ENCODE measurements at regions of chr11 and their contacts with region 1.

Region 1: GRCh38 chr11:2077061-2077802 is 62.0 kb downstream of the IGF2 start:
- DNase-seq: no peak
- H3K4me3 Mint-ChIP-seq: no peak overlapping the region
- H3K27ac Mint-ChIP-seq: peak overlapping the region; percentile 84
- H3K4me1 Mint-ChIP-seq: peaks cover 23% of the 10 kb centered on the region
- H3K27me3 Mint-ChIP-seq: peaks cover 20% of the 10 kb centered on the region

Region 2: GRCh38 chr11:1863352-1864216 is 213.6 kb before region 1 on chr11:
- intact Hi-C with region 1: no loop called
- DNase-seq: no peak
- H3K4me3 Mint-ChIP-seq: no peak overlapping the region
- H3K27ac Mint-ChIP-seq: no peak overlapping the region
- H3K4me1 Mint-ChIP-seq: peaks cover 4% of the 10 kb centered on the region
- H3K27me3 Mint-ChIP-seq: no peaks in the 10 kb centered on the region

Region 3: DNA sequence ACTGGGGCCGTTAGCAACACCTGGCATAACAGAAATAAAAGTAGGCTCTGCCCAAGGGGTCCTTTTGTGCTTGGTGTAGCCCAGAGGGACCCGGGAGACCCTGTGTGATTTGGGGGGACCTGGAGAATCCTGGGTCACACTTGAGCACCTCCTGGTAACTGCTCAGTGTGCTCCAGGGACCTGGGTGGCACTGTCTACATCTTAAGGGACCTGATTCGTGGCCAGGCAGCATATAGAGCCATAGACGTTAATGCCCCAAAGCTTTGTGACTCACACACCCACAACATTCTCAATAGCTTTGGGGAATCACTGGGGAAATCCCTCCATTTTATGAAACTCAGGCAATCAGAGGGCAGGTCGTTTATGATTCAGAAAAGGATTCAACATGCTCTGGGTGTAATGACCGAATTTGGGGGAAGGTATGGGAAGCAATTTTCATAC is 65.5 kb after region 1 on chr11:
- intact Hi-C with region 1: loop called (anchors 1 kb)
- DNase-seq: no peak
- H3K4me3 Mint-ChIP-seq: peak overlapping the region; percentile 42
- H3K27ac Mint-ChIP-seq: peak overlapping the region; percentile 82
- H3K4me1 Mint-ChIP-seq: peaks cover 14% of the 10 kb centered on the region
- H3K27me3 Mint-ChIP-seq: peaks cover 56% of the 10 kb centered on the region

Region 4: GRCh38 chr11:2269601-2270321 is 192.5 kb after region 1 on chr11:
- intact Hi-C with region 1: loop called (anchors 1 kb)
- DNase-seq: peak; percentile 39
- H3K4me3 Mint-ChIP-seq: no peak overlapping the region
- H3K27ac Mint-ChIP-seq: no peak overlapping the region
- H3K4me1 Mint-ChIP-seq: peaks cover 15% of the 10 kb centered on the region
- H3K27me3 Mint-ChIP-seq: peaks cover 22% of the 10 kb centered on the region

Measured in activated T-helper 2 cell treated with anti-CD3 and anti-CD28 coated beads, Interferon-gamma antibody, Interleukin-2, Interleukin-4, amounts not matched to agents 10 μg/mL and 5 μg/mL and 100 μg/mL, durations not matched to agents 14 hours and 24 hours and 36 hours (primary cell).